ENCODE measurements at regions of chr4 and their contacts with region 1.

Region 1: GRCh38 chr4:110165382-110166285 is 32.8 kb downstream of the ELOVL6 start:
- DNase-seq: peak; percentile 33
- ATAC-seq: peak; percentile 100
- H3K4me3 Mint-ChIP-seq: peak overlapping the region; percentile 59
- H3K27ac Mint-ChIP-seq: peak overlapping the region; percentile 93
- H3K4me1 Mint-ChIP-seq: peaks cover 19% of the 10 kb centered on the region
- H3K27me3 Mint-ChIP-seq: no peaks in the 10 kb centered on the region

Region 2: GRCh38 chr4:110196206-110196870 is 30.7 kb after region 1 on chr4:
- POLR2A ChIA-PET with region 1: interaction called, 44 read pairs
- DNase-seq: peak; percentile 79
- ATAC-seq: peak; percentile 22
- H3K4me3 Mint-ChIP-seq: peak overlapping the region; percentile 94
- H3K27ac Mint-ChIP-seq: peak overlapping the region; percentile 98
- H3K4me1 Mint-ChIP-seq: peaks cover 23% of the 10 kb centered on the region
- H3K27me3 Mint-ChIP-seq: peaks cover 2% of the 10 kb centered on the region

Region 3: GRCh38 chr4:110250023-110250387 is 84.4 kb after region 1 on chr4:
- POLR2A ChIA-PET with region 1: no interaction called
- DNase-seq: no peak
- ATAC-seq: no peak
- H3K4me3 Mint-ChIP-seq: no peak overlapping the region
- H3K27ac Mint-ChIP-seq: no peak overlapping the region
- H3K4me1 Mint-ChIP-seq: no peaks in the 10 kb centered on the region
- H3K27me3 Mint-ChIP-seq: peaks cover 12% of the 10 kb centered on the region

Measured in activated naive CD8-positive, alpha-beta T cell treated with anti-CD3 and anti-CD28 coated beads, Interleukin-2, amount 10 ng/mL, durations not matched to agents 7 days and 5 days (primary cell).